Gastrocnemius medialis (tissue), 4 donors: ENCODE measurements at regions of chr1 and their contacts with region 1.

Region 1: DNA sequence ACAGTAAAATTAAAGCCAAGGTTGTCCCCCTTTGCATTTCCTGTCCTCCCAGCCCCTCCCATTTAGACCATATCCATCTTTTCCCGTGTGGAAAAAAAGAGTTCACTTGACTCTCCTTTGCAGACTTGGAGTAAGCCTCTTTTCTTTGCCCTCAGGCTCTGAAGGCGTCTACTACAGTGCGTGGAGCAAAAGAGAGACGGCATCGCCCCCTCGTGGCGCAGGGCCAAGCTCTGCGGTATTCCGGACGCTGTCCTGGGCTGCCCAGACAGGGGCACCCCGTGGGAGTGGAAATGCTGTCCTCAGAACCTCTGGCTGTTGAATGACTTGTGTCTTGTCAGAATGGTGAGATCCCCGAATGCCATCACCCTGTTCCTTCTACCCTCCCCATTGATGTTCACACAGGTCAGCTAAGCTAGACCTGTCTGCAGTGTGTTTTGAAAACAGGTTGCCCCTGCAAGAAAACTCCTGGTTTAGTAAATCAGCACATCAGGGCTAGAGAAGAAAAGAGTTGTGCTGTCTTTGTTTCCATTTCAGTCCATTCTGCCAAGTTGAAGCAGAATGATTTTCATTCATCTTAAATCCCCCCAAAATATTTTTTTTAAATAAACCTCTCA is 12.3 kb upstream of the GJA8 start:
- DNase-seq: no peak
- ATAC-seq: no peak
- H3K4me3 ChIP-seq: no peak overlapping the region
- H3K27ac ChIP-seq: no peak overlapping the region
- H3K4me1 ChIP-seq: peaks cover 0 to 4% of the 10 kb centered on the region in 2 donors
- H3K27me3 ChIP-seq: no peaks in the 10 kb centered on the region
- CTCF ChIP-seq: peak in 2 of 5 experiments; percentile 41 to 43
- POLR2A ChIP-seq: no peak

Region 2: DNA sequence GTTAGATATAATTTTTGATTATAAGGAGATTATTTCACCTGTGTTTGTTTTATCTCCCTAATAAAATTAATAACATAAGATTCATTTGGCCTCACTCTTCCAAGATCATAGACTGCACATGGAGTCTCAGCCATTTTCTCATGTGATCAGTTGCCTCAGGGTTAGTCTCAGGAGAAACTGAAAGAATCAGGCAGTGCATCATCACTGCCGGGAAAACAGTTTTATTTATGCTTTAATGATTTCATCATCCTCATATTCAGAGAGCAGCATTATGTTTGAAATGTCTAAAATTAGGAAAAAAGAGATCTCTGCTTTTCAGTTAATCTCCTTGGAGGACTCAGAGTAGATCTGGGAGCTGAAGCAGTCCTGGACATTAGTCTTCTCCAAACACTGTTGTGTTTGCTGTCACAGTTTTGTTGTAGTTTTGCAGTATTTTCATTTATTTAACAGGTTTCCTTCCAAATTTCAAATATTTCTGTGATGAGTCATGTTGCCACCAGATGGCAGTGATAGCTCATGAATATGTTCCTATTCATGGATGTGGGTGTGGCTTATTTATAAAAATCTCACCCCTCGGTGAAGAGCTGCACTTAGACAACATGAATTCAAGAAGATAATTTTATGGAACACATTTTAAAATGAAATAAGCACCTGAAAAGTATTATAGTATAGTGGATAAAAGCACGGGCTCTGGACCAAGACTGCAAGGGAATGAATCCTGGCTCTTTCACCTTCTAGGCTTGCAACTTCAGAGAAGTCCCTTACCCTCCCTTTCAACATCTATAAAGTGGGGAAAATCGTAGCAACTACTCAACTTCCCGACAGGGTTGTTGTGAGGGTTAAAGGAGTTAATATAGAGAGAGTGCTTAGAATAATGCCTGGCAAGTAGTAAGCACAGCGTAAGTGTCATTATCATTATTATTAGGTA is 616.6 kb before region 1 on chr1:
- in situ Hi-C with region 1: loop called in 1 of 4 experiments (anchors 25 kb)
- intact Hi-C with region 1: no loop called
- DNase-seq: no peak
- ATAC-seq: peak; percentile 73 to 82
- H3K4me3 ChIP-seq: no peak overlapping the region
- H3K27ac ChIP-seq: peak overlapping the region; percentile 1 to 22 (median 12)
- H3K4me1 ChIP-seq: peaks cover 0 to 4% of the 10 kb centered on the region in 2 donors
- H3K27me3 ChIP-seq: no peaks in the 10 kb centered on the region
- CTCF ChIP-seq: peak in 4 of 5 experiments; percentile 15 to 49 (median 37)
- POLR2A ChIP-seq: no peak

Region 3: DNA sequence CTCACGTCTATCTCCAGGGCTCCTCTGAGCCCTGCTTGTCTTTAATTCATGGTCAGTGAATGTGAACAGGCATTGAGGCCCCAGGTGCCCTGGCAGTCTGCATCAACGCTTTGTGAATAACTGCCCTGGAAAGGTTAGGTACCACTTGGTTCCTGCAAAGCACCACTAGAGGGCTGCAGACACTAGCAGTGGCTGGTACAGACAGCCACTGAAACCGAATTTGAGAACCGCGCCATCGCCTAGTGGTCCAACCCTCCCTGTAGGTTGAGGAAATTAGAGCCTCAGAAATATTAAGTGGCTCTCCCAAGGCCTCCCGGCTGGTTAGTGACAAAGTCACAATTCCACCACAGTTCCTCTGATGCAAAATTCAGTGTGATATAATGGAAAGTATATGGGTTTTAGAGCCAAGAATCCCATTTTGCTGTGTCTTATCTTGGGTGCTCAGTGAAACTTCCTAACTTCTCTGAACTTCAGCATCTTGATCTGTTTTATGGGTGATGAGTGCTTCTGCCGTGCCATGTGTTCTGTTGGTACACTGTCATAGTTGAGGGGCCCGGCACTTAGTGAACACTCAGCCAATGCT is 395.2 kb before region 1 on chr1:
- in situ Hi-C with region 1: loop called (anchors 5 to 25 kb)
- intact Hi-C with region 1: loop called (anchors 1 kb)
- DNase-seq: peak; percentile 32 to 59
- ATAC-seq: peak; percentile 92 to 95
- H3K4me3 ChIP-seq: no peak overlapping the region
- H3K27ac ChIP-seq: no peak overlapping the region
- H3K4me1 ChIP-seq: no peaks in the 10 kb centered on the region
- H3K27me3 ChIP-seq: no peaks in the 10 kb centered on the region
- CTCF ChIP-seq: peak; percentile 79 to 93 (median 81)
- POLR2A ChIP-seq: no peak

Region 4: GRCh38 chr1:147504801-147505311 is 385.4 kb before region 1 on chr1:
- in situ Hi-C with region 1: loop called in 1 of 4 experiments (anchors 10 kb)
- intact Hi-C with region 1: no loop called
- DNase-seq: peak in 1 of 2 donors; percentile 49
- ATAC-seq: peak; percentile 56 to 95
- H3K4me3 ChIP-seq: peak overlapping the region in 2 of 4 donors; percentile 22 to 27
- H3K27ac ChIP-seq: peak overlapping the region in 1 of 4 donors; percentile 58
- H3K4me1 ChIP-seq: no peaks in the 10 kb centered on the region
- H3K27me3 ChIP-seq: no peaks in the 10 kb centered on the region
- CTCF ChIP-seq: no peak
- POLR2A ChIP-seq: no peak

Region 5: GRCh38 chr1:147640553-147641165 is 249.6 kb before region 1 on chr1:
- in situ Hi-C with region 1: no loop called
- intact Hi-C with region 1: loop called (anchors 5 kb)
- DNase-seq: peak; percentile 52 to 78
- ATAC-seq: peak; percentile 92 to 97
- H3K4me3 ChIP-seq: no peak overlapping the region
- H3K27ac ChIP-seq: no peak overlapping the region
- H3K4me1 ChIP-seq: peaks cover 6 to 7% of the 10 kb centered on the region in 2 donors
- H3K27me3 ChIP-seq: no peaks in the 10 kb centered on the region
- CTCF ChIP-seq: peak; percentile 73 to 87 (median 76)
- POLR2A ChIP-seq: no peak

Region 6: DNA sequence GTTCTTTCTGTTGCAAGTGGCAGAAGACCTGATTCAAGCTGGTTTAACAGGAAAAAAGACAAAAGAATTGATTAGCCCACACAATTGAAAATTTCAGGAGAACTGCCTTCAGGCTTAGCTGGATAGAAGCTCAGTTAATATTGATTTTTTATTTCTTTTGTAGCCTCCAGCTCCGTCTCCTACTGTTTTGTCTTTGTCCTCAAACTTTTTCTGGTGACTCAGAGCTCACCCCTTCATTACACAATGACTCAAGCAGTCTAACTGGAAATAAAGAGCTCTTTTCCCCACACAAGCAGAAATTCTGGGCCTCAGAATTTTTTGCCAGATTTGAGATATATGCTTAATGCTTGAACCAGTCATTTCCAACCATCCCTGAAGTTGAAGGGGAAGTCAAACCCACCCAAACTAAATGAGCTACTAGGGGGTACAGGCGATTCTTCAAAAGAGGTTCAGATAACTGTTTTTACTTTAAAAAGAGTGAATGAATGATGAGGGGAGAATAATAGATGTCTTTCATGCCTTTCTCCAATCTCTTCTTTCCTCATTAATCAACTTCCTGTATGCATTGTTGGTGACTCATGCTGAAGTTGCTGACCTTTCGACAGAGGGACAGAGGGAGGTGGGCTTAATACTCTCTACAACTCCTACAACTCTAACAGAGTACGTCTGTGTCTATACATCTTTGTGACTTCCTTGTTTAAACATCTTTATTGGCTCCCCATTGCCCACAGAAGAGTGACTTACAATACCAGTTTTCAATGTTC is 213.8 kb before region 1 on chr1:
- in situ Hi-C with region 1: no loop called
- intact Hi-C with region 1: no loop called
- DNase-seq: no peak
- ATAC-seq: no peak
- H3K4me3 ChIP-seq: no peak overlapping the region
- H3K27ac ChIP-seq: no peak overlapping the region
- H3K4me1 ChIP-seq: no peaks in the 10 kb centered on the region
- H3K27me3 ChIP-seq: no peaks in the 10 kb centered on the region
- CTCF ChIP-seq: no peak
- POLR2A ChIP-seq: no peak

Region 7: DNA sequence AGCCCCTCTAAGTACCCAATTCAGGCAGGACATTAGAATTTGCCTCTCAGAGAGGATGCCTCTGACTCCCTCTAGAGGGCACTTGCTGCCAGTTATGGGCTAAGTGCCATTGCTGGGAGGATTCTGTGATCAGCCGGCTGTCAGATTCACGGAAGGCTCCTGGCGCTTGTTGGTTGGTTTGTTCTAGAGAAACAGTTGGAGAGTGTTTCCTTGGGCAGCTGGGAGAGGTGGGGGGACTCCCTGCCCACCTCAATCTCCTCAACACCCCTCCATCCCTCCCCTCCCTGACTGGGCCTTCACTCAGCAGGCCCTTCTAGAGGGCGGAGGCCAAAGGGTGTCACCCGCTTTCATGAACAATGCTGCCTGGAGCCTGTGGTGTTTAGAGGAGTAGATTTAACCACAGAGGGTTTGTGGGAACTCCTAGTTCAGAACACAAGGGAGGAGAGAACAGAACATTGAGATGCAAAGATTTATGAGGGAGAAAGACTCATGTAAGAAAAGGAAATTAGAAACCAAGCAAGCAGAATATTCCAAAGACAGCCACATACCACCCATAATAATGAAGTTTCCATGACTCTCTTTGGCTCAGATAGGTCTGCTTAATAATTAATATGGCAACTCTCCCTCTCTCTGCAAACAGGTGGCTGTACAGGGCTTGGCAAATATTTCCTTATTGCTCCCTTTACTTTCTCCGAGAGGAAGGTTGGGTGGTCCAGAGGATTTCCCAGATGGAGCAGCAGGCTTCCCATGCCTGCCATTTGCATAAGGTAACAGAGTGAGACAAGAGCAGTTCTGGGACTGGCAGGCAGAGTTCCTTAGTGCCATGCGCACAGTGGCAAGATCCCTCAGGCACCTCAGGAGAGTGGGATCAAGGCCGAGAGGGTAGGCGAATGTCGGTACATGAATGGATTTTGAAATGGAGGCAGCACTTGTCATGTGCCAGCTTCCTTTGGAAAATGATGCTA is 190.0 kb before region 1 on chr1:
- in situ Hi-C with region 1: loop called in 1 of 4 experiments (anchors 25 kb)
- intact Hi-C with region 1: no loop called
- DNase-seq: peak; percentile 27 to 40
- ATAC-seq: peak; percentile 76 to 78
- H3K4me3 ChIP-seq: no peak overlapping the region
- H3K27ac ChIP-seq: no peak overlapping the region
- H3K4me1 ChIP-seq: no peaks in the 10 kb centered on the region
- H3K27me3 ChIP-seq: no peaks in the 10 kb centered on the region
- CTCF ChIP-seq: peak; percentile 49 to 80 (median 69)
- POLR2A ChIP-seq: no peak

Region 8: DNA sequence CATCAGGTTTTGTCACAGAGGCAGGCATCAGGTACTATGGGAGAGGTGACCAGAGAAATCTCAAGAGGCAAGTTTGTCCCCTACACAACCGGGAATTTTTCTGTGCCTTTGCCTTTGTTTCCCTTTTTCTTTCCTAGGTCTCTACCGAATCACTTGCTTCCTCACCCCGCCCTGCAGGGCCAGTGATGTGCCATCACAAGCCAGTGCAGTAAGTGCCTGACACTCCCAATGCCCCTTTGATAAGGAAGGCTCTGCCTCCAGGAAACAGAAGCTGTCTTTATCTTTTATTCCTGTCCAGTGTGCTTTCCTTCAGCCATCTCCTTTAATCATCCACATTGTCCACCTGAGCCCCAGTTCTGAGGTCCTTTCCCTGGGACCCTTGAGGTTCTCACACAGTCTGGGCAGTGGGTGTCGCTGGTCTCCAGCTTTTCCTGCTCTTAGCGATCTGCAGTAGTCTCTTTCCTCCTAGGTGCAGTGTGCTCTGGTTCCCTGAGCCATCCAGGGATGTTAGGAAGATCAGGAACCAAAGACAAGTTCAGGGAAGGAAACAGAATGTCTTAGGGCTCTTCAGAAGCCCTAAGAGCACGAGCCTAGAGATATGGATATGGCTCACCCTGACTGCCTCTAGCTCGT is 166.5 kb before region 1 on chr1:
- in situ Hi-C with region 1: loop called in 2 of 4 experiments (anchors 10 to 25 kb)
- intact Hi-C with region 1: loop called (anchors 1 kb)
- DNase-seq: no peak
- ATAC-seq: peak in 1 of 2 donors; percentile 50
- H3K4me3 ChIP-seq: no peak overlapping the region
- H3K27ac ChIP-seq: no peak overlapping the region
- H3K4me1 ChIP-seq: no peaks in the 10 kb centered on the region
- H3K27me3 ChIP-seq: no peaks in the 10 kb centered on the region
- CTCF ChIP-seq: peak in 3 of 5 experiments; percentile 36 to 39 (median 37)
- POLR2A ChIP-seq: no peak